ENCODE measurements at regions of chr4 and their contacts with region 1.

Region 1: DNA sequence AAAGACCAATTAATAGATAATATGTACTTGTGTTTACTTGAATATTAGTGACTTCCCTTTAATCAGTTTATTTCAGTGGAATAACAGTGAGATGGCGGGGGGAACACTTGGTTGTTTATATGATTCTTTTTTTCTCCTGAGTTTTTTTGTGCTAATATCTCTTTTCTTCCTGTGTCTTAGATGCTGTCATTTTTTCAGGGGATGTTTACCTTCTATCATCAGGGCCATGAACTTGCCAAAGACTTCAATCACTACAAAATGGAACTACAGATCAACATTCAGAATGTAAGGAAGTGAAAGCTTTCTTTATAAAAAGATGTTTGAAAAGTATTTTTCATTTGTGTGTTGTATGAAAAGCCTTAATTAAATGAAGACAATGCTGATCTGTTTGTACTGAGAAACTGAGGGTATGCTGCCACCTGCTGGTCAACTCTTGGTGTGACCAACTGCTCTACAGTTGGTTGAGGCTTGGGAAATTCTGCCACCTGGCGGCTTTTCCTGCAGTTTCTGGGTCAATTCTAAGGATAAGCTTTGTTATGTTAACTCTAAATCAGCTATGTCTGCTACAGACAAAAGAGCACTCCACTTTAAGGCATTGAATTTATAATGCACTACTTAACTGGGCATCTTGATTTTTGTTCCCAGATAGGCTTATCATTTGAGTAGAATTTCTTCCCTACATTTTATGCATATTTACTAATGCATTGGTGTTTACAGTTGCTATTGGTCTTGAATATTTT is 134.8 kb downstream of the ARHGAP10 start:
- DNase-seq: peak; percentile 84
- ATAC-seq: peak; percentile 95
- H3K4me3 ChIP-seq: no peak overlapping the region
- H3K4me3 Mint-ChIP-seq: no peak overlapping the region
- H3K27ac ChIP-seq: no peak overlapping the region
- H3K27ac Mint-ChIP-seq: no peak overlapping the region
- H3K4me1 ChIP-seq: no peaks in the 10 kb centered on the region
- H3K4me1 Mint-ChIP-seq: no peaks in the 10 kb centered on the region
- H3K27me3 ChIP-seq: no peaks in the 10 kb centered on the region
- H3K27me3 Mint-ChIP-seq: peaks cover 2% of the 10 kb centered on the region
- CTCF ChIP-seq: peak; percentile 100

Region 2: GRCh38 chr4:147019061-147019460 is 847.6 kb before region 1 on chr4:
- CTCF ChIA-PET with region 1: interaction called, 11 read pairs
- POLR2A ChIA-PET with region 1: no interaction called
- intact Hi-C with region 1: no loop called
- DNase-seq: peak; percentile 65
- ATAC-seq: peak; percentile 31
- H3K4me3 ChIP-seq: no peak overlapping the region
- H3K4me3 Mint-ChIP-seq: no peak overlapping the region
- H3K27ac ChIP-seq: no peak overlapping the region
- H3K27ac Mint-ChIP-seq: no peak overlapping the region
- H3K4me1 ChIP-seq: no peaks in the 10 kb centered on the region
- H3K4me1 Mint-ChIP-seq: no peaks in the 10 kb centered on the region
- H3K27me3 ChIP-seq: no peaks in the 10 kb centered on the region
- H3K27me3 Mint-ChIP-seq: peaks cover 5% of the 10 kb centered on the region
- CTCF ChIP-seq: peak; percentile 75

Region 3: DNA sequence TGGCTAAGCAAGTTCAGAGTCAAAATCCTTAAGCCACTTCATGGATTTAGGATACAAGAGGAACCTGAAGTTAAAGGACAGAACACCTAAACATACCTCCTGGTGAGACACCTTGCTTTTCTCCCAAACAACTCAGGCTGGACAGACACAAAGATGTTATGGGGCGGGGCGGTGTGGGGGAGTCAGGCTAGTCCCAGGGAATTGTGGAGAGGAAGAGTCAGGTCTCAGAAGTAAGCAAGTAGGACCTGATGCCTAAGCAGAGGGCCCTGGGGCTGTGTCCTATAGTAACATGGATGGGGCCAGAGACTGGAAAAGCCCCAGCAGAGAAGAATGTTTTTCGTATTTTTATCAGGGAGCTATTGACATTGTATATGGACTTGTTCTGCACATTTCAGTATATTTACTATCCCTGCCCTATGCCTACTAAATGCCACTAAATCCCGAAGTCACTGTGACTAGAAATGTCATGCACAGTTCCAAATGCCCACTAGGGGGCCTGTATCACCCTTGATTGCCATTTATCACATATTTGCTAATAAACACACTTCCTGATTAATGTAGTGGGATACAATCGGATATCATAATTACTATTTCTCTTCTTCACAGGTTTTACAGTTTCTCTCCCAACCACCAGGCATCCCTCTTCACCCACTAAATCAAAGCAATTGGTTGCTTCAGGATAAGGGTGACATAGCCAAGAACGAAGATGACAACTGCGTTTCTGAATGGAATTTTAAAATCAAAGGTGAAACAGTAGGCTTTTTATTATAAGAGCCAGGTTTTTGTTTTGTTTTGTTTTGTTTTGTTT is 158.6 kb before region 1 on chr4:
- CTCF ChIA-PET with region 1: interaction called, 44 read pairs
- POLR2A ChIA-PET with region 1: no interaction called
- intact Hi-C with region 1: no loop called
- DNase-seq: peak; percentile 53
- ATAC-seq: no peak
- H3K4me3 ChIP-seq: no peak overlapping the region
- H3K4me3 Mint-ChIP-seq: no peak overlapping the region
- H3K27ac ChIP-seq: no peak overlapping the region
- H3K27ac Mint-ChIP-seq: no peak overlapping the region
- H3K4me1 ChIP-seq: no peaks in the 10 kb centered on the region
- H3K4me1 Mint-ChIP-seq: peaks cover 2% of the 10 kb centered on the region
- H3K27me3 ChIP-seq: no peaks in the 10 kb centered on the region
- H3K27me3 Mint-ChIP-seq: no peaks in the 10 kb centered on the region
- CTCF ChIP-seq: peak; percentile 87

Region 4: DNA sequence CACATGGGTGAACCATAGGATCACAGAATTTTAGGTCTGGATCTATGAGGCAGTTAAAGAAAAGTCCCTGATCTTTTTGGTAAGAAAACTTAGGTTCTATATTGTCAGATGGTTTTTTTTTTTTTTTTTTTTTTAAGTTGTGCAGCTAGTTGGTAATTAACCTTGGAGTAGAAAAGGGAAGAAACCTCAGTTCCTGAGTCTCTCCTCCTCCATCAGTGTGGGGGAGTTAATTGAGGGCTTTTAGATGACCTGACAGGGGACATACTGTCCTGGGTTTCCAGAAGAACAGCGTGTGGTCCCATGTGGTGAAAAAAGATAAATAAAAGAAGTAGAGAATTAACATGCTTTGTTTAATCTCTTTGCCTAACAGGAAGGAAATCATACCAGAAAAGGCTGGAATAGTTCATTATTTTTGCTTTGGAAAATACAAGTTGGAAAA is 11.1 kb before region 1 on chr4:
- CTCF ChIA-PET with region 1: interaction called, 32 read pairs
- POLR2A ChIA-PET with region 1: no interaction called
- intact Hi-C with region 1: no loop called
- DNase-seq: no peak
- ATAC-seq: no peak
- H3K4me3 ChIP-seq: no peak overlapping the region
- H3K4me3 Mint-ChIP-seq: no peak overlapping the region
- H3K27ac ChIP-seq: no peak overlapping the region
- H3K27ac Mint-ChIP-seq: no peak overlapping the region
- H3K4me1 ChIP-seq: no peaks in the 10 kb centered on the region
- H3K4me1 Mint-ChIP-seq: no peaks in the 10 kb centered on the region
- H3K27me3 ChIP-seq: no peaks in the 10 kb centered on the region
- H3K27me3 Mint-ChIP-seq: peaks cover 5% of the 10 kb centered on the region
- CTCF ChIP-seq: no peak

Region 5: DNA sequence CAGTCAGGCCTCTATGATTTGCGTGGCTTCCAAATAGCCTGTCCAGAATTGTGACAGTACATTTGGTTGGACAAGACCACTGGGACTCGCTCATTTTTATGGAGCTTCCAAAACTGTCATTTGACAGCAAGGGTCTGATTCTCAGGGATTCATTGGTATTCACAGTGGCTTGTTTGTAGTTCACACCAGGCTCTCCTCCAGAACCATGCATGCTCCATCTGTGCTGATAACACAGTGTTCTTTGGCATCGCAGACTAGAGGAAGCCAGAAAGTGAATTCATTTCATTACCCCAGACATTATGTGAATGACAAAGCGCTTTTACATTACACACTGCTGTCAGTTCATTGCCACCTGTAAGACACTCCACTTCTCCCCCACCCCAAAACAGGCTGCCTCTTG is 73.5 kb after region 1 on chr4:
- CTCF ChIA-PET with region 1: no interaction called
- POLR2A ChIA-PET with region 1: no interaction called
- intact Hi-C with region 1: no loop called
- DNase-seq: no peak
- ATAC-seq: no peak
- H3K4me3 ChIP-seq: no peak overlapping the region
- H3K4me3 Mint-ChIP-seq: no peak overlapping the region
- H3K27ac ChIP-seq: no peak overlapping the region
- H3K27ac Mint-ChIP-seq: no peak overlapping the region
- H3K4me1 ChIP-seq: peaks cover 5 to 22% of the 10 kb centered on the region in 2 donors
- H3K4me1 Mint-ChIP-seq: peaks cover 20% of the 10 kb centered on the region
- H3K27me3 ChIP-seq: no peaks in the 10 kb centered on the region
- H3K27me3 Mint-ChIP-seq: peaks cover 5% of the 10 kb centered on the region
- CTCF ChIP-seq: no peak